Activated naive CD4-positive, alpha-beta T cell treated with anti-CD3 and anti-CD28 coated beads for 36 hours (primary cell): ENCODE measurements at regions of chr1 and their contacts with region 1.

Region 1: DNA sequence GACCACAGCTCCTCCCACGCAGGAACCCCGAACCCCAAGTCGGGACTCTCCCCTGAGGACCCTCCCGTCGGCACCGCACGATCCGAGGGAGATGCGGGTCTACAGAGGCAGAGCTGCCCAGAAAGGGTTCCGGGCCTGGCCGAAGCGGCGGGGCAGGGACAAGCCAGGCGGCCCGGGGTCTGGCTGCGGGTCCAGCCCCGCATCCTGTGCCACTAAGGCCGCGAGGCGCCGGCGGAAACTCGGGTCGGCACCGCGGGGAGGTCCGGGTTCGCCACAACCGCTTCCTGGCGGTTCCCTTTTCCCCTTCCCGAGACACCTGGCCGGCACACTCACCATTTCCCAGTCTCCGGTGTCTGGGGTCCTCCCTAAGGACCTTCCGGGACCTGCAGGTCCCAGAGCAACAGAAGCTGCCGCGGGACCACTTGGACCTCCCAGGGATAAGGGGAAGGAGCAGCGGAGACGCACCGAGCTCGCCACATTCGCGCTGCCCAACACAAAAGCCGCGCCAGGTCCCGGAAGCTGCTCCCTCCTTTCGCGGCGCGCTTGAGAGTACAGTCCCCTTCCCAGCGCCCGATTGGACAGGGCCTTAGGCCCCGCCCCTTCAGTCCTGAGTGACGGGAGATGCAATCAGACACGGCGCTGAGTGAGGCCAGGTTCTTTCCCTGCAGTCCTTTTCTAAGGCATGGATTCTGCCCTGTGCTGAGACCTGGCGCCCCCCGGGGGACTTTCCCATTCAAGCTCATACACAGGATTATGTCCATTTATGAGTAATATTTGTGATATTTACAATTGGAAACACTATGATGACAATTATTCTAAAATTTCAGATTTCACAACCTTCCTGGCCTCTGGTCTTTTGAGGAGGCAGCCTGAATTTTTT is at the start of gene ZNF670:
- DNase-seq: peak; percentile 98
- H3K4me3 Mint-ChIP-seq: peak within 1 kb of the TSS; percentile 91
- H3K27ac Mint-ChIP-seq: peak within 1 kb of the TSS; percentile 90
- H3K4me1 Mint-ChIP-seq: peaks cover 22% of the 10 kb centered on the region
- H3K27me3 Mint-ChIP-seq: peaks cover 6% of the 10 kb centered on the region
- total RNA-seq, gene ZNF670: 4.1 to 4.3 TPM

Region 2: GRCh38 chr1:245953876-245954660 is 1124.4 kb before region 1 on chr1:
- CTCF ChIA-PET with region 1: no interaction called
- intact Hi-C with region 1: loop called (anchors 10 kb)
- DNase-seq: peak; percentile 17
- H3K4me3 Mint-ChIP-seq: peak overlapping the region; percentile 54
- H3K27ac Mint-ChIP-seq: peak overlapping the region; percentile 87
- H3K4me1 Mint-ChIP-seq: peaks cover 27% of the 10 kb centered on the region
- H3K27me3 Mint-ChIP-seq: no peaks in the 10 kb centered on the region

Region 3: GRCh38 chr1:246989901-246990300 is 88.6 kb before region 1 on chr1:
- CTCF ChIA-PET with region 1: no interaction called
- intact Hi-C with region 1: no loop called
- DNase-seq: no peak
- H3K4me3 Mint-ChIP-seq: no peak overlapping the region
- H3K27ac Mint-ChIP-seq: no peak overlapping the region
- H3K4me1 Mint-ChIP-seq: no peaks in the 10 kb centered on the region
- H3K27me3 Mint-ChIP-seq: no peaks in the 10 kb centered on the region

Region 4: GRCh38 chr1:247007511-247008405 is 70.7 kb before region 1 on chr1 and contains the start of gene ZNF695:
- CTCF ChIA-PET with region 1: no interaction called
- intact Hi-C with region 1: loop called (anchors 2 kb)
- DNase-seq: peak; percentile 77
- H3K4me3 Mint-ChIP-seq: peak within 1 kb of the TSS; percentile 82
- H3K27ac Mint-ChIP-seq: no peak within 1 kb of the TSS
- H3K4me1 Mint-ChIP-seq: peaks cover 6% of the 10 kb centered on the region
- H3K27me3 Mint-ChIP-seq: peaks cover 42% of the 10 kb centered on the region
- total RNA-seq, gene ZNF695: 0.52 to 0.86 TPM

Region 5: DNA sequence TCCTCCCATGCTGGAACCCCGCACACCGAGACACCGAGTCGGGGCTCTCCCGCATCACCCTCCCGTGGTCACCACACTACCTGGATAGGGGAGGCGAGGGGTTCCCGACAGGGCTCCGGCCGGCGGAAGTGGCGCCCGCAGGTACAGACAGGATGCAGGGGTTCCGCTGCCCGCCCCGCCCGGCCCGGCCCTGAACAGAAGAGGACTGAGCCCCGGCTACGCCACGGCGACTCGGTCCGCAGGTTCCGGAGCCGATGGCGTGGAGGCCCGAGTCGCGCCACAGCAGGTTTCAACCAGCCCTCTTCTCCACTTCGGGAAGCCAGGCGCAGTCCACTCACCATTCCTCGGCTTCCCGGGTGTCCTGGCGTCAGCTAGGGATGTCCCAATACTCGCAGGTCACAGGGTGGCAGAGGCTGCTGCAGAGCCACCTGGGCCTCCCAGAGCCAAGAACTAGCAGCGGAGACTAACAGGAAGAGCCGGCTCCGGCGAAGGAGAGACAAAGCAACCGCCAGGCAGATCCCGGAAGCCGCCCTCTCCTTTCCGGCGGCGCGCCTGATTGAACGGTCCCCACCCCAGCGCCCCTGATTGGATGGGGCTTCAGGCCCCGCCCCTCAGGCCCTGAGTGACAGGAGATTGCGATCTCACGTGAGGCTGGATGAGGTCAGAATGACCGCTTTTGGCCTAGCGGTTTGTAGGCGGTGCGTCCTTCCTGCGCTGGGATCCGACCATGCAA is 25.5 kb after region 1 on chr1 and contains the start of gene ZNF669:
- CTCF ChIA-PET with region 1: no interaction called
- intact Hi-C with region 1: loop called (anchors 1 kb)
- DNase-seq: peak; percentile 97
- H3K4me3 Mint-ChIP-seq: peak within 1 kb of the TSS; percentile 88
- H3K27ac Mint-ChIP-seq: peak within 1 kb of the TSS; percentile 90
- H3K4me1 Mint-ChIP-seq: peaks cover 17% of the 10 kb centered on the region
- H3K27me3 Mint-ChIP-seq: peaks cover 12% of the 10 kb centered on the region
- total RNA-seq, gene ZNF669: 8.2 to 8.4 TPM

Region 6: DNA sequence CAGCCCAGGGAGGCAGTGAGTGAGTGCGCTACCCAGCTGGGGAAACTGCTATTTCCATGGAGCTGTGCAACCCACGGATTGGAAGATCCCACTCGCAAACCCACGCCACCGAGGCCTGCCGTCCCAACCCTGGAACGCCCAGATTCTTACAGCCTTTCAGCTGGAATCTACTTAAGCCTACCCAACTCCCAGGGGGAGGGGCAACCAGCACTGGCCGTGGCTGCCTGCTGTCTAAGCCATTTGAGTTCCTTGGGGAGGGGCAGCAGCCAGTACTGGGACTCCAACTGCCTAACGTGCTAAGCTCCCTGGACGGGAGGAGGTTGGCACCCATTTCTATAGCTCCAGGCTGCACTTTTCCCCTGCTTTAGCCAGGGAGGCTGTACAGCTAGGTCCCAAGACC is 52.7 kb after region 1 on chr1:
- CTCF ChIA-PET with region 1: no interaction called
- intact Hi-C with region 1: loop called (anchors 1 kb)
- DNase-seq: no peak
- H3K4me3 Mint-ChIP-seq: no peak overlapping the region
- H3K27ac Mint-ChIP-seq: no peak overlapping the region
- H3K4me1 Mint-ChIP-seq: peaks cover 6% of the 10 kb centered on the region
- H3K27me3 Mint-ChIP-seq: no peaks in the 10 kb centered on the region

Region 7: DNA sequence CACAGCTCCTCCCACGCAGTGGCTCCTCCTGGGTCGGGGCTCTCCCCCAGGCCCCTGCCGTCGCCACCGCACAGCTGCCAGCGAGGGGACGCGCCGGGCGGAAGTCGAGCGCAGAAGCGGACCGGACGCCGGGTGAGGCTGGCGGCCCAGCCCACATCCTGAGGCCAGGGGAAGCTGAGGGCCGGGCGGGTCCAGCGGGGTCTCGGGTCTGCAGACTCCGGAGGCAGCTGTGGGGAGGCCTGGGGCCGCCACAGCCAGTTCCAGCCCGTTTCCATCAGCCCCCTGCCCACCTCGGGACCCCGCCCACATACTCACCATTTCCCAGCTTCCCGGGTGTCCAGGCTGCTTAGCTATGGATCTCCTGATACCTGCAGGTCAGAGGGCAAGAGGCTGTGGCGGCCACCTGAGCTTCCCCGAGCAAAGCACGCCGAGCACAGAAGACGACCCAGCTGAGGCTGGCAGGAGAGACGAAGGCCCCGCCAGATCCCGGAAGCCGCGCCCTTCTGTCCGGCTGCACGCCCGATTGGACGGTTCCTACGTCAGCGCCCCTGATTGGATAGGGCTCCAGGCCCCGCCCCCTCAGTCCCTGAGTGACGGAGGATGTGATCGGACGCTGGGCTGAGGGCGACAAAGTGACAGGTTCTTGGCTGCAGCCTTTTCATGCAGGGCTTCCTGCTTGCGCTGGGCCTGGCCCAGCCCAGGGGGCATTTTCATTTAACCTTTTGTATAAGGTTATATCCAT is 132.0 kb after region 1 on chr1:
- CTCF ChIA-PET with region 1: no interaction called
- intact Hi-C with region 1: loop called (anchors 1 kb)
- DNase-seq: peak; percentile 98
- H3K4me3 Mint-ChIP-seq: peak overlapping the region; percentile 90
- H3K27ac Mint-ChIP-seq: peak overlapping the region; percentile 93
- H3K4me1 Mint-ChIP-seq: peaks cover 56% of the 10 kb centered on the region
- H3K27me3 Mint-ChIP-seq: no peaks in the 10 kb centered on the region

Region 8: DNA sequence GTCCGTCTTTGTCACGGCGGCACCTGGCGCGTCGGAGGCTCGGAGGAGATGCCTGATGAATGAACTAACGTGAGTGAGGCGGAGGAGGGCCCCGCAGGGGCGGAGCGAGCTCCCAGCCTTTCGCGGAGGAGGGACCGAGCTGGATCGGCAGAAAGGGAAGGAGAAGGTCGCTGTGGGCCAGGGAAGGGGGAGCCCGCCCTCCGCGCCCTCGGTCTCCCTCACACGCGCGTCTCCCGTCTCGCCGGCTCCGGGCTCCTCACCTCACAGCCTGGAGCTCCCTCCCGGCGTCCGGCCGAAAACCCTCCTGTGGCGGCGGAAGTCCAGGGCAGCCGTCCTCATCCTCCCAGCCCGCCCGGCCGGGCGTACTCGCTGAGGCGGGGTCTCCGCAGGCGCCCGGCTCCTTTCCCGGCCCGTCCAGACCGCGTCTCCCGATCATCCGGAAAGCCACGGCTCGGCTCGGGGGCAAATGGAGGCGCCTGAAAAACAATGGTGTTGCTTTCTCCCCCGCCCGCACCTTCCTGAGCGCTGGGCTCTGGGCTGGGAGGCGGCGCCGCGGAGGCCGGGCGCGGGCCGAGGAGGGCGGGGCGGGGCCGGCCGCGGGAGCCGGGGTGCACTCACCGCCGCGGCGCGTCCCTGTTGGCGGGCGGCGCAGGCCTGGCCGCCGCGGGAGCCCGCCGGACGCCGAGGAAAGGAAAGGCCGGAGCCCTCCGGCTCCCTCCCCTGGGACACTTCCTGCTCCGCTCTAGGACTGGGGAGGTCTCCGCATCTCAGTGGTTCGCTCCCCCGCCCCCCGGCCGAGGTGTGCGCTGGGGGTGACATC is 252.9 kb after region 1 on chr1 and contains the start of gene ZNF496:
- CTCF ChIA-PET with region 1: no interaction called
- intact Hi-C with region 1: loop called (anchors 1 kb)
- DNase-seq: peak; percentile 80
- H3K4me3 Mint-ChIP-seq: peak within 1 kb of the TSS; percentile 86
- H3K27ac Mint-ChIP-seq: peak within 1 kb of the TSS; percentile 75
- H3K4me1 Mint-ChIP-seq: peaks cover 30% of the 10 kb centered on the region
- H3K27me3 Mint-ChIP-seq: no peaks in the 10 kb centered on the region
- total RNA-seq, gene ZNF496: 9.8 to 10.6 TPM